Vagina (tissue), 2 donors: ENCODE measurements at regions of chrX and their contacts with region 1.

Region 1: DNA sequence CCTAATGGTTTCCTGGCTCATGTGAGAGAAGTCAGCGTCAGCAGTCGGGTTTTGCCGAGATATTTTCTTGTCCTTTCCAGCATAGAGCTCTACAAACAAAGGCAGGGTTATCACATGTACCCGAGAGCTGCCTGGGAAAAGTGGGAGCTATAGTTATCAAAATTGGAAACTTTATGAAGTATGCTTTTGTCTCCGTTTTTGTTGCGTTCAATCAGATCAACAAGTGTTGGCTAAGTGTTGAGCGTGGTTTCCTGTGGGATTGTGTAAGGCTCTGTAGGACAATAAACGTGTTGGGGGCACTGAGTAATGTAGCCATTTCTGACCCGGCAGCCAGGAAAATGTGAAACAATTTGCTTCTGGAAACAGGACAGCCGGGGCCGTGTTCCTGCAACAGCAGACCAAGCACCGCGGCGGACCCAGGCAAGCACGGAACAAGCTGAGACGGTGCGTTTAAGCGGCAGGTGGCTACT is at the start of gene BMX:
- DNase-seq: no peak
- H3K4me3 ChIP-seq: no peak within 1 kb of the TSS
- H3K27ac ChIP-seq: no peak within 1 kb of the TSS
- H3K4me1 ChIP-seq: no peaks in the 10 kb centered on the region
- H3K27me3 ChIP-seq: no peaks in the 10 kb centered on the region
- CTCF ChIP-seq: no peak
- POLR2A ChIP-seq: no peak
- total RNA-seq, gene BMX: 2.0 TPM

Region 2: DNA sequence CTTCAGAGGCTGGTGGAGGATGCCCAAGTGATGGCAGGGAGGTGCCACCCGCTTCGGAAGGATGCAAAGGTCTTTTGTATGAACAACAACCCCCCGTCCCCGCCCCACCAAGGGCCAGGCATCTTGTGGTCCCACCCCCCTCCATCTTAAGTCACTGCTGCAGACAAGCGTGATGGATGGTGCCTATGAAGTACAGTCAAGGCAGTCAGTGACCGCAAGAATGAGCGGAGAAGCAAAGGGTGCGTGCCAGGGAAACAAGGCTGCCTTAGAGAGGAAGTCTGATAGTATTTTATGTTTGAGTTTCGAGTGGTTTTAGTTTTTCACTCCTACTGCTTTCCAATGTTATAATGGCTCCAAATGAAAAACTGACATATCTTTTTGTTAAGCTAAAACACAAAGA is 1614.9 kb before region 1 on chrX:
- intact Hi-C with region 1: no loop called
- DNase-seq: no peak
- H3K4me3 ChIP-seq: no peak overlapping the region
- H3K27ac ChIP-seq: no peak overlapping the region
- H3K4me1 ChIP-seq: no peaks in the 10 kb centered on the region
- H3K27me3 ChIP-seq: no peaks in the 10 kb centered on the region
- CTCF ChIP-seq: no peak
- POLR2A ChIP-seq: no peak

Region 3: DNA sequence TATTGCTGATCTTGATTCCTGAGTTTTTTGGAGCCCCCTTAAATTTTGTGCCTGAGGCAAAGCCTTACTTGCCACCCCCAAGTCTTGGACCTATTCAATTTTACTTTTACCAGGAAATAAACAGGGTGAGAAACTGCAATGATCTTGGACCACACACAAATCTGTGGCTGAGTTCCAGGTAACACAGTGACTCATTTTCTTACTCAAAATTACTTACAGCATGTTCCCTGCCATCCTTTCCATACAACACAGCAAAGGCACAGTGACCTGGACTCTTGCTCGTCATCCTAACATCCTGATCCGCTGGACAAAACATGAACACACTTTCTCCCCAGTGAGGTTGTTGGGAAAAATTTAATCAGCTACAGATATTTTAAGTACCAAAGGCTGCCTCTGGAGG is 1088.7 kb after region 1 on chrX:
- intact Hi-C with region 1: loop called (anchors 5 kb)
- DNase-seq: no peak
- H3K4me3 ChIP-seq: no peak overlapping the region
- H3K27ac ChIP-seq: no peak overlapping the region
- H3K4me1 ChIP-seq: no peaks in the 10 kb centered on the region
- H3K27me3 ChIP-seq: no peaks in the 10 kb centered on the region
- CTCF ChIP-seq: no peak
- POLR2A ChIP-seq: no peak